SK-N-SH (cell line): ENCODE measurements at regions of chr15 and their contacts with region 1.

Region 1: GRCh38 chr15:57732526-57733331 is 26.2 kb downstream of the POLR2M start:
- DNase-seq: peak; percentile 51
- H3K4me3 ChIP-seq: peak overlapping the region in 1 of 2 experiments; percentile 27; a peak in 1 of 4 replicates
- H3K27ac ChIP-seq: peak overlapping the region in 1 of 2 experiments; percentile 29; a peak in 2 of 4 replicates
- H3K4me1 ChIP-seq: peaks cover 9% of the 10 kb centered on the region in 2 experiments; a peak in 3 of 4 replicates
- H3K27me3 ChIP-seq: no peaks in the 10 kb centered on the region
- CTCF ChIP-seq: peak; percentile 98
- EP300 ChIP-seq: peak in 1 of 2 experiments; percentile 42; a peak in 1 of 4 replicates
- RAD21 ChIP-seq: peak; percentile 56

Region 2: GRCh38 chr15:57706405-57707209 is 26.1 kb before region 1 on chr15 and contains the start of gene POLR2M:
- CTCF ChIA-PET with region 1: interaction called, 13 read pairs
- POLR2A ChIA-PET with region 1: no interaction called
- DNase-seq: peak; percentile 88
- H3K4me3 ChIP-seq: peak within 1 kb of the TSS; percentile 80 to 99
- H3K27ac ChIP-seq: peak within 1 kb of the TSS; percentile 82 to 85
- H3K4me1 ChIP-seq: peaks cover 0 to 12% of the 10 kb centered on the region in 2 experiments; a peak in 3 of 4 replicates
- H3K27me3 ChIP-seq: no peaks in the 10 kb centered on the region
- CTCF ChIP-seq: no peak
- EP300 ChIP-seq: peak; percentile 18 to 62; a peak in 2 of 4 replicates
- RAD21 ChIP-seq: no peak
- polyA plus RNA-seq, gene POLR2M: 105 and 160 TPM in 2 replicates

Region 3: DNA sequence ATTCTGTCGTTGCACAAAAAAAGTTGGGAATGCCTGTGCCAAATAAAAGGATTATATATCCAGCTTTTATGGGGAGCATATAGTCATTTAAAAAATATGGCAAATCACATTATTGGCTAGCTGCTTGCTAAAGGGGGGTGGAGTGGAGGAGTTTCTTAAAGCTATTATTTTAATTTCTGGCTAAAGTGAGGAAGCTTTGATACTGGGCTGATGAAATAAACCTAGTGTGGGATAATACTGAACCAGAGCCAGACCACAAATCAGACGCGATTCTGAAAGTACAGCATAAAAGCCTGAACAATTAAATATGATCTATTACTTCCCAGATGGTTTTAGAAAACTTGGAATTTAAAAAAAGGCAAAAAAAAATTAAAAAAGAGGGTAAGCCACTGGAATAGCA is 11.9 kb before region 1 on chr15:
- CTCF ChIA-PET with region 1: interaction called, 47 read pairs
- POLR2A ChIA-PET with region 1: no interaction called
- DNase-seq: no peak
- H3K4me3 ChIP-seq: no peak overlapping the region
- H3K27ac ChIP-seq: no peak overlapping the region
- H3K4me1 ChIP-seq: no peaks in the 10 kb centered on the region
- H3K27me3 ChIP-seq: no peaks in the 10 kb centered on the region
- CTCF ChIP-seq: no peak
- EP300 ChIP-seq: no peak
- RAD21 ChIP-seq: no peak

Region 4: GRCh38 chr15:57743424-57743823 is 10.7 kb after region 1 on chr15:
- CTCF ChIA-PET with region 1: interaction called, 37 read pairs
- POLR2A ChIA-PET with region 1: no interaction called
- DNase-seq: no peak
- H3K4me3 ChIP-seq: no peak overlapping the region
- H3K27ac ChIP-seq: no peak overlapping the region
- H3K4me1 ChIP-seq: no peaks in the 10 kb centered on the region; a peak in 2 of 4 replicates
- H3K27me3 ChIP-seq: no peaks in the 10 kb centered on the region
- CTCF ChIP-seq: peak; percentile 10; the same call in 1 of the 2 replicates
- EP300 ChIP-seq: no peak
- RAD21 ChIP-seq: peak; percentile 51

Region 5: DNA sequence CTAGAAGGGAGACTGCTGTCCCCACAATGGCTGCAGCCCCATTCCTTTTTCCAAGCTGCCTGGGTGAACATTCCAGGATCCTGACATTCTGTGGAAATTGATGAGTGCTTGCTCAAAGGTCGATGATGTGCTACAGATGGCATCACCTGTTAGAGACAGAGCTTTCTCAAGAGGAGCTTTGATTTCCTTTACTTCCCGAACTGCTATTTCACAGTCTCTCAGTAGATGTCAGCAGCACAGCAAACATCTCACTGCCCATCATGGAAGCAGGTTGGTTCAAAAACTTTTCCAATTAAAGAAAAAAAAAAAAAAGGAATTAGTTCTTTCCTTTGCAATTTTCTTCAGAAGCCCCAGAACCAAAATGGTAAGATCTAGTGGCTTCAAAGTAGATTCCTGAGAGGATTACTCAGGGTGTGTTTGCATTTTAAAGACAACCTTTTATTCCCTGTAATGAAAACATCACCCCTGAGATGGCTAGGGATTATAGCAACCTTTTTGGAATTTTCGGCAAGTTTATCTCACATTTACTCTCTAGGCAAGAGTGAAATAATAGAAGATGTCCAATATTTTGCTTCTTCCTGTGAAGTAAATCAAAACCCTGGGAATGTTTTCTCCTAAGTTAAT is 18.6 kb after region 1 on chr15:
- CTCF ChIA-PET with region 1: interaction called, 52 read pairs
- POLR2A ChIA-PET with region 1: no interaction called
- DNase-seq: peak; percentile 48
- H3K4me3 ChIP-seq: no peak overlapping the region
- H3K27ac ChIP-seq: no peak overlapping the region
- H3K4me1 ChIP-seq: no peaks in the 10 kb centered on the region; a peak in 1 of 4 replicates
- H3K27me3 ChIP-seq: no peaks in the 10 kb centered on the region
- CTCF ChIP-seq: peak; percentile 62
- EP300 ChIP-seq: no peak
- RAD21 ChIP-seq: peak; percentile 85

Region 6: GRCh38 chr15:57866149-57866736 is 133.5 kb after region 1 on chr15:
- CTCF ChIA-PET with region 1: interaction called, 44 read pairs
- POLR2A ChIA-PET with region 1: no interaction called
- DNase-seq: peak; percentile 42
- H3K4me3 ChIP-seq: peak overlapping the region in 1 of 2 experiments; percentile 51; a peak in 1 of 4 replicates
- H3K27ac ChIP-seq: no peak overlapping the region
- H3K4me1 ChIP-seq: no peaks in the 10 kb centered on the region
- H3K27me3 ChIP-seq: no peaks in the 10 kb centered on the region
- CTCF ChIP-seq: peak; percentile 70
- EP300 ChIP-seq: no peak
- RAD21 ChIP-seq: peak; percentile 69